A549 (cell line): ENCODE measurements at regions of chr3 and their contacts with region 1.

Region 1: GRCh38 chr3:107833043-107833442 is 257.8 kb downstream of the CD47 start:
- DNase-seq: no peak
- ATAC-seq: no peak
- H3K4me3 ChIP-seq: no peak overlapping the region
- H3K27ac ChIP-seq: no peak overlapping the region
- H3K4me1 ChIP-seq: no peaks in the 10 kb centered on the region
- CTCF ChIP-seq: no peak
- EP300 ChIP-seq: no peak
- POLR2A ChIP-seq: no peak
- RAD21 ChIP-seq: no peak

Region 2: GRCh38 chr3:107846279-107846852 is 13.3 kb after region 1 on chr3:
- CTCF ChIA-PET with region 1: interaction called, 14 read pairs
- POLR2A ChIA-PET with region 1: no interaction called
- DNase-seq: peak; percentile 62 to 74
- ATAC-seq: peak; percentile 88 to 98
- H3K4me3 ChIP-seq: no peak overlapping the region
- H3K27ac ChIP-seq: no peak overlapping the region
- H3K4me1 ChIP-seq: no peaks in the 10 kb centered on the region
- CTCF ChIP-seq: peak; percentile 72
- EP300 ChIP-seq: no peak
- POLR2A ChIP-seq: no peak
- RAD21 ChIP-seq: peak; percentile 56

Region 3: GRCh38 chr3:107870943-107871638 is 38.0 kb after region 1 on chr3:
- CTCF ChIA-PET with region 1: no interaction called
- POLR2A ChIA-PET with region 1: no interaction called
- DNase-seq: no peak
- ATAC-seq: no peak
- H3K4me3 ChIP-seq: no peak overlapping the region
- H3K27ac ChIP-seq: no peak overlapping the region
- H3K4me1 ChIP-seq: peaks cover 12% of the 10 kb centered on the region
- CTCF ChIP-seq: no peak
- EP300 ChIP-seq: no peak
- POLR2A ChIP-seq: no peak
- RAD21 ChIP-seq: no peak